ENCODE measurements at regions of chr2 and their contacts with region 1.

Region 1: DNA sequence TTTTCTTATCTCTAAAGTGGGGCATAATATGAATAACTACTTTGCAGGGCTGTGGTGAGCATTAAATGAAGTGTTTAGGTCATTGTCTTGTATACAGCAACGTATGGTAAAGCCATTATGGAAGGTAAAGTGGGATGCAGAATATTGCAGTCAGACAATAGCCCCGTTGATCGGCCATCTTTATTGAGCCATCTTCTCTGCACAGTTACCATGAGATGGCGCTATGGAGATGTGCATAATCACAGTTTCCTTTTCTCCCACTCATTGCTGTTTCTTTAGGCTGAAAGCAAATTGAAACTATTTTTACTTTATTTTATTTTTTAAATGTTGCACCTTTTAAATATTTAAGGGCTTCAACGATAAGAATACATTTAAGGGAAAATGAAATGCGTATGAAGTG is 108.9 kb downstream of the THSD7B start:
- DNase-seq: peak in 1 of 2 experiments; percentile 11
- H3K4me3 ChIP-seq: no peak overlapping the region
- H3K4me3 Mint-ChIP-seq: no peak overlapping the region
- H3K27ac Mint-ChIP-seq: no peak overlapping the region
- H3K4me1 ChIP-seq: no peaks in the 10 kb centered on the region
- H3K4me1 Mint-ChIP-seq: no peaks in the 10 kb centered on the region
- H3K27me3 ChIP-seq: no peaks in the 10 kb centered on the region
- H3K27me3 Mint-ChIP-seq: no peaks in the 10 kb centered on the region
- CTCF ChIP-seq: peak in 1 of 2 experiments; percentile 7

Region 2: GRCh38 chr2:136891100-136891499 is 16.8 kb after region 1 on chr2:
- CTCF ChIA-PET with region 1: no interaction called
- POLR2A ChIA-PET with region 1: no interaction called
- intact Hi-C with region 1: no loop called
- DNase-seq: no peak
- H3K4me3 ChIP-seq: no peak overlapping the region
- H3K4me3 Mint-ChIP-seq: no peak overlapping the region
- H3K27ac Mint-ChIP-seq: no peak overlapping the region
- H3K4me1 ChIP-seq: no peaks in the 10 kb centered on the region
- H3K4me1 Mint-ChIP-seq: no peaks in the 10 kb centered on the region
- H3K27me3 ChIP-seq: no peaks in the 10 kb centered on the region
- H3K27me3 Mint-ChIP-seq: peaks cover 9% of the 10 kb centered on the region
- CTCF ChIP-seq: no peak

Region 3: DNA sequence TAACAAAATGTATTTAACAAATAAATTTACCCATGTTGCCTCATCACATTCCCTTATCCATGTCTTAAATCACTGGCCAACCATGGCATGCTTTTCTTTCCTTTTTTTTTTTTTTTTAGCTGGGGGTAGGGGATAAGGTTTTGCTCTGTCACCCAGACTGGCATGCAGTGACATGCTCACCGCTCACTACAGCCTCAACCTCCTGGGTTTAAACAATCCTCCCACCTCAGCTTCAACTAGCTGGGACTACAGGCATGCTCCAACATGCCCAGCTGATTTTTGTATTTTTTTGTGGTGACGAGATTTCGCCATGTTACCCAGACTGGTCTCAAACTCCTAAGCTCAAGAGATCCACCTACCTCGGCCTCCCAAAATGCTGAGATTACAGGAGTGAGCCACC is 157.5 kb after region 1 on chr2:
- CTCF ChIA-PET with region 1: no interaction called
- POLR2A ChIA-PET with region 1: no interaction called
- intact Hi-C with region 1: no loop called
- DNase-seq: no peak
- H3K4me3 ChIP-seq: no peak overlapping the region
- H3K4me3 Mint-ChIP-seq: no peak overlapping the region
- H3K27ac Mint-ChIP-seq: no peak overlapping the region
- H3K4me1 ChIP-seq: no peaks in the 10 kb centered on the region
- H3K4me1 Mint-ChIP-seq: no peaks in the 10 kb centered on the region
- H3K27me3 ChIP-seq: no peaks in the 10 kb centered on the region
- H3K27me3 Mint-ChIP-seq: no peaks in the 10 kb centered on the region
- CTCF ChIP-seq: no peak

Region 4: DNA sequence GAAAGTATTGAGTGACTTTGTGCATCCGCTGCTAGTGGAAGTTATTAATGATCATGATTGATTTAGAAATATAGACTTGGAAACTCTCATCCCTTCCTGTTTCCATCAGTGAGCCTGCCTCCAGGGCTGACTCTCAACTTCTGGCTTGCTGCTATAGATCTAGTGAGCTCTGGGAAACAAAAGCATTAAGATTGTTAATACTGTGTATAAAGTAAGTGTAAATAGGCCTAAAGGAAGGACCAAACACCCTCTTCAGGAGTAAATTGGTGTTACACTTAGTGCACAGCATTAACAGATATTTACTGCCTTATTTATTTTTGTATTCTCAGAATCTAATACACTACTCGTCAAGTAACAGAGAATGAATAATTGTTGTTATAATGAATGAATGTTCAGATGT is 176.7 kb after region 1 on chr2:
- CTCF ChIA-PET with region 1: no interaction called
- POLR2A ChIA-PET with region 1: no interaction called
- intact Hi-C with region 1: loop called (anchors 10 kb)
- DNase-seq: peak in 1 of 2 experiments; percentile 9
- H3K4me3 ChIP-seq: no peak overlapping the region
- H3K4me3 Mint-ChIP-seq: no peak overlapping the region
- H3K27ac Mint-ChIP-seq: no peak overlapping the region
- H3K4me1 ChIP-seq: peaks cover 14% of the 10 kb centered on the region
- H3K4me1 Mint-ChIP-seq: peaks cover 12% of the 10 kb centered on the region
- H3K27me3 ChIP-seq: no peaks in the 10 kb centered on the region
- H3K27me3 Mint-ChIP-seq: no peaks in the 10 kb centered on the region
- CTCF ChIP-seq: peak; percentile 48 to 51

Region 5: GRCh38 chr2:137763494-137763893 is 889.2 kb after region 1 on chr2:
- CTCF ChIA-PET with region 1: no interaction called
- POLR2A ChIA-PET with region 1: interaction called, 13 read pairs
- intact Hi-C with region 1: no loop called
- DNase-seq: no peak
- H3K4me3 ChIP-seq: no peak overlapping the region
- H3K4me3 Mint-ChIP-seq: no peak overlapping the region
- H3K27ac Mint-ChIP-seq: no peak overlapping the region
- H3K4me1 ChIP-seq: no peaks in the 10 kb centered on the region
- H3K4me1 Mint-ChIP-seq: no peaks in the 10 kb centered on the region
- H3K27me3 ChIP-seq: no peaks in the 10 kb centered on the region
- H3K27me3 Mint-ChIP-seq: no peaks in the 10 kb centered on the region
- CTCF ChIP-seq: no peak

Measured in Caco-2 (cell line).